Lower lobe of right lung (tissue), 2 donors: ENCODE measurements at regions of chr17 and their contacts with region 1.

Region 1: GRCh38 chr17:35537601-35538141 is at the start of gene SLFN12L:
- DNase-seq: no peak
- ATAC-seq: peak; percentile 34 to 35
- H3K4me3 ChIP-seq: peak within 1 kb of the TSS; percentile 36
- H3K27ac ChIP-seq: peak within 1 kb of the TSS; percentile 50
- H3K4me1 ChIP-seq: peaks cover 54% of the 10 kb centered on the region
- H3K27me3 ChIP-seq: no peaks in the 10 kb centered on the region
- CTCF ChIP-seq: no peak
- total RNA-seq, gene SLFN12L: 4.0 TPM

Region 2: DNA sequence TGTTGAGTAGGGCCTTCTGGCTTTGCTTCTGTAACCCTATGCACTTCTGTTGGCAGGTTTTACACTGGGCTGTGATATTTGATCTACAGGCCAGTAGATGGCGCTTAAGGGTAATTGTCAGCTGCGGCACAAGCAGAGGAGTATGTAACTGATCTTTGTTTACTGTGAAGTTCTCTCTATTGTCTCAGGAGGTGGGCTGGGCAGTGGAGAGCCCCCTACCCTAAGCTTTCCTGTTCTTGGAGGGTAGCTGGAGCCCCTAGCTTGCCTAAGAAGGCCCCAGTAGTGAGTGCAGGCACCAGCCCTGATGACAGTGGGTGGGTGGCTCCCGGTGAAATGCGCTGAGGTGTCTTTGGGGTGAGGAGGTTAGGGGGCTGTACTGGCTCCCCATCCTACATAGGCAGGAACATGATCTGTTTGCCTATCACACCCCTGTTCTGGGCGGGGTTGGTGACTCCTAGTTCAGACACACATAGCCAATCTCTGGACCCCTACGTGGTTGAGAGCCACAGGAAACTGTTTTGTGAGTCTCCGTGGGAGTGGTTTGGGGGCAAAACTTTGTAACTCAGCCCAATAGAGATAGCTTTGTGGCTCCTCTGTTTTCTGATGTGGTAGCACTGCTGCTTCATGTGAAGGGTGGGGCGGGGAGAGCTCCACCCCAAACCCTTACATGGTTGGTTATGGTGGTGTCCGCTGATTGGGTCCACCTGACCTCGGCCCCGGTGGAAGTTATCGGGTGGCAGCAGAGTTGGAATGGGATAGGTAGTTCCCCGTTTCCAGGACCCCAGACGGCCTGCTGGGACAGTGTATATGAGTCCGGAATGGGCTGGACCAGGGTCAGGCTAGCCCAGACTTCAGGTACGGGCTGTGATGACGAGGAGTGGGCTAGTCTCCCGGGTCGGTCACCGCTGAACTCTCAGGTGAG is 224.6 kb before region 1 on chr17:
- intact Hi-C with region 1: loop called (anchors 10 kb)
- DNase-seq: peak; percentile 55
- ATAC-seq: peak; percentile 91 to 92
- H3K4me3 ChIP-seq: peak overlapping the region; percentile 49
- H3K27ac ChIP-seq: peak overlapping the region; percentile 68
- H3K4me1 ChIP-seq: peaks cover 31% of the 10 kb centered on the region
- H3K27me3 ChIP-seq: no peaks in the 10 kb centered on the region
- CTCF ChIP-seq: peak; percentile 80

Region 3: GRCh38 chr17:35596530-35597233 is 59.0 kb after region 1 on chr17:
- intact Hi-C with region 1: no loop called
- DNase-seq: no peak
- ATAC-seq: peak; percentile 28 to 45
- H3K4me3 ChIP-seq: no peak overlapping the region
- H3K27ac ChIP-seq: no peak overlapping the region
- H3K4me1 ChIP-seq: peaks cover 4% of the 10 kb centered on the region
- H3K27me3 ChIP-seq: no peaks in the 10 kb centered on the region
- CTCF ChIP-seq: no peak